GM12878 (cell line): ENCODE measurements at regions of chr16 and their contacts with region 1.

Region 1: DNA sequence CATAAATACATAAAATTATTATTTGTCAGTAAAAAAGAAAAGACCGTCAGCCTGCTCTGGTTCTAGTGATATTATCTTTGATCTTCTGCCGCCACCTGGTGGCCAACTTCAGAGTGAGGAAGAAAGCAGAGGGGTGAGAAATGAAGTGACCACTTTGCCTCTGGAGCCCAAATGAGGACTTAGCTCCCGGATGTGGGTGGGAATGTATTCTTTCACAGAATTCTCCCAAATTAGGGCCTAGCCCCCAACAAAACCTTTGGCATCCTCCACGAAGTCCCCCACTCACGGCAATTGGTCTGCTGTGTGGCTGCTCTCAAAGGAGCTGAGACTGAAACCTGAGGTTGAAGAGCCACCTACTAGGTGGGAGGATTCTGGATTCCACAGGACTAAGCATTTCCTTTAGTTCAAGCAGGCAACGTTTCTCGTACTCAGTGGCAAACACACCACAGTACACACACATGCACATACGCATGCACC is 4.9 kb upstream of the ZNF267 start:
- DNase-seq: no peak
- ATAC-seq: peak; percentile 78
- H3K4me3 ChIP-seq: peak overlapping the region; percentile 28; the same call in 1 of the 2 replicates
- H3K27ac ChIP-seq: no peak overlapping the region
- H3K4me1 ChIP-seq: peaks cover 24% of the 10 kb centered on the region
- H3K27me3 ChIP-seq: no peaks in the 10 kb centered on the region
- CTCF ChIP-seq: peak; percentile 59 to 71 (median 70)
- EP300 ChIP-seq: no peak
- POLR2A ChIP-seq: no peak
- RAD21 ChIP-seq: peak; percentile 87

Region 2: GRCh38 chr16:30997000-30997886 is 871.5 kb before region 1 on chr16:
- CTCF ChIA-PET with region 1: interaction called, 5 read pairs
- POLR2A ChIA-PET with region 1: no interaction called
- RAD21 ChIA-PET with region 1: no interaction called
- SMC1A ChIA-PET with region 1: interaction called, 3 read pairs
- in situ Hi-C with region 1: loop called (anchors 5 kb)
- intact Hi-C with region 1: no loop called
- DNase-seq: peak; percentile 51
- ATAC-seq: peak; percentile 90
- H3K4me3 ChIP-seq: peak overlapping the region; percentile 97
- H3K27ac ChIP-seq: peak overlapping the region; percentile 82
- H3K4me1 ChIP-seq: peaks cover 17% of the 10 kb centered on the region
- H3K27me3 ChIP-seq: no peaks in the 10 kb centered on the region; a peak in 1 of 4 replicates
- CTCF ChIP-seq: no peak
- EP300 ChIP-seq: no peak
- POLR2A ChIP-seq: peak; percentile 85
- RAD21 ChIP-seq: no peak

Region 3: GRCh38 chr16:31880322-31880979 is 11.7 kb after region 1 on chr16:
- CTCF ChIA-PET with region 1: interaction called, 20 read pairs
- POLR2A ChIA-PET with region 1: interaction called, 5 read pairs
- RAD21 ChIA-PET with region 1: interaction called, 12 read pairs
- SMC1A ChIA-PET with region 1: interaction called, 37 read pairs
- in situ Hi-C with region 1: no loop called
- intact Hi-C with region 1: no loop called
- DNase-seq: peak; percentile 38
- ATAC-seq: peak; percentile 65
- H3K4me3 ChIP-seq: peak overlapping the region; percentile 51; the same call in 1 of the 2 replicates
- H3K27ac ChIP-seq: peak overlapping the region; percentile 30
- H3K4me1 ChIP-seq: peaks cover 18% of the 10 kb centered on the region
- H3K27me3 ChIP-seq: no peaks in the 10 kb centered on the region
- CTCF ChIP-seq: 0 out of 6 replicates have a peak, but pooled peaks of 1 of the 3 experiments have one; percentile 2
- EP300 ChIP-seq: 0 out of 4 replicates have a peak, but pooled peaks of 1 of the 2 experiments have one; percentile 26
- POLR2A ChIP-seq: no peak
- RAD21 ChIP-seq: no peak